Natural killer cell (primary cell): ENCODE measurements at regions of chr9 and their contacts with region 1.

Region 1: DNA sequence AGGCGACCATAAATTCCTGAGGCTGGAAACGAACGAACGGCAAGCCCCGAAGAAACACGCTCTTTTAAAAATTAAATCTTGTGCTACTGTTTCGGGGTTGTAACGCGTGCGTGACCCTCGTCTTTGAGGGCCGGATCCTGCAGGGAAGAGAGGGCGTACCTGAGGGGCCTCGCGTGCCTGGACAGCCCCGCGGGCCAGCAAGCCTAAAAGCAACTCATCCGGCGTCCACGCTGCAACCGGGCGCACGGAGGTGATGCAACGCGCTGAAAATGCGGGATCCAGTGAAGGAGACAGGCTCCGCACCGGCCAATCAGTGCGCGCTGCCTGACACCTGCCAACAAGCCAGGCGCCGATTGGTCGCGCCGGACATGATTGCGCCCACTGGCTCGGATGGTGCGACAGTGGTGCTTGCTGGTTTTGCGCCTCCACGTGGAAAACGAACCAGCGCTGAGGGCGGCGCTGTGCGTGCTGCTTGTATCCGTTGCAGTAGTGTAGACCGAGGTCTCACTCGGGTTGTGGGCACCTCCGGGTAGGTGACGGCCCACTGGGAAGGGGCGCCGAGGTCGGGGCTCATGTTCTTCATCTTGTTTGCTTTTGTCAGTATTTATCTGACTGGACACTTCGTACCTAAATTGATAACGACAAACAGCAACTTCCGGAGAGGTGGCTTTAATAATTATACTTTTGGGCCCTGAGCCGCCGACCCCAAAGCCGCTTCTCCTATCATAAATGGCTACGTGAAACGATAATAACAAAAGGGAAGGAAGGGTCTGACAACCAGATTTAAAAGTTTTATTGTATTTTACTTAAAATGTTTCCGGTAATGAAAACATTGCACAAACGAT is at the start of gene IARS1:
- DNase-seq: peak; percentile 99 to 100
- ATAC-seq: peak; percentile 92 to 99 (median 96)
- H3K4me3 ChIP-seq: peak within 1 kb of the TSS; percentile 89
- H3K4me3 Mint-ChIP-seq: peak within 1 kb of the TSS; percentile 100
- H3K27ac ChIP-seq: peak within 1 kb of the TSS; percentile 72
- H3K27ac Mint-ChIP-seq: peak within 1 kb of the TSS; percentile 97 to 98
- H3K4me1 ChIP-seq: peaks cover 16% of the 10 kb centered on the region
- H3K4me1 Mint-ChIP-seq: peaks cover 36 to 40% of the 10 kb centered on the region in 2 donors
- H3K27me3 ChIP-seq: no peaks in the 10 kb centered on the region
- H3K27me3 Mint-ChIP-seq: no peaks in the 10 kb centered on the region
- CTCF ChIP-seq: peak; percentile 40
- total RNA-seq, gene IARS1: 50.8 to 70.8 (median 66.2) TPM

Region 2: DNA sequence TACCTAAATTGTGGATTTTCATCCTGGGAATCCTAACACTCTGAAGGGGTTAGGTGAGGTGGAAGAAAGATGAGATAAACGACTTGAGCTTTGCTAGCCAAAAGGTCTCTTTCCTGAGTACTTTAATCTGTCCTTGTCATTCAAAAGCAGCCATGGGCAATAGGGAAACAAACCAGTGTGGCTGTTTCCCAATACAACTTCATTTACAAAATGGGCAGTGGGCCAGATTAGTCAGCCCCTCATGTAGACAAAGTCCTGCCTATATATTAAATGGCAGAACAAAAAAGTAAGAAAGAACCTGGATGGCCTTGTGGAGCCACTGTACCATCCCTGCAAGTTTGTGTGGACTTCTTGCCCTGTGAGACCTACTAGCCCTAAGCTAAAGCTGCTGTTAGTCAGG is 819.0 kb before region 1 on chr9:
- intact Hi-C with region 1: no loop called
- DNase-seq: no peak
- ATAC-seq: no peak
- H3K4me3 ChIP-seq: no peak overlapping the region
- H3K4me3 Mint-ChIP-seq: no peak overlapping the region
- H3K27ac ChIP-seq: no peak overlapping the region
- H3K27ac Mint-ChIP-seq: no peak overlapping the region
- H3K4me1 ChIP-seq: no peaks in the 10 kb centered on the region
- H3K4me1 Mint-ChIP-seq: no peaks in the 10 kb centered on the region
- H3K27me3 ChIP-seq: peaks cover 2% of the 10 kb centered on the region
- H3K27me3 Mint-ChIP-seq: peaks cover 10 to 21% of the 10 kb centered on the region in 2 donors
- CTCF ChIP-seq: no peak

Region 3: DNA sequence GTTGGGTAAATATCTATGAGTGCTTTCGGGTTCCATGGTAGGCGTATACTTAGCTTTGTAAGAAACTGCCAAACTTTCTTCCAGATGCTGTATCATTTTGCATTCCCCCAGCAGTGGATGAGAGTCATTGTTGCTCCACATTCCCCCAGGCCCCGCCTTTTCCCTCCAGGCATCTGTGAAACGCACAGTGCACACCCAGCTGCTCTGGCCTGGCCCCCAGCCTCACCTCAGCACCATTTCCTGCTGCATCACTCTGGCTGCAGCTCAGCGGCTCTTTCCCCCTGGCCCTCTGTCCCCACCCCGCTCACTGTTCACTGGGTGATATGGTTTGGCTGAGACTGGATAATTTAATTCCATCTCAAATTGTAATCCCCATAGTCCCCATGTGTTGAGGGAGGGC is 101.9 kb before region 1 on chr9:
- intact Hi-C with region 1: no loop called
- DNase-seq: no peak
- ATAC-seq: no peak
- H3K4me3 ChIP-seq: no peak overlapping the region
- H3K4me3 Mint-ChIP-seq: no peak overlapping the region
- H3K27ac ChIP-seq: no peak overlapping the region
- H3K27ac Mint-ChIP-seq: no peak overlapping the region
- H3K4me1 ChIP-seq: no peaks in the 10 kb centered on the region
- H3K4me1 Mint-ChIP-seq: no peaks in the 10 kb centered on the region
- H3K27me3 ChIP-seq: no peaks in the 10 kb centered on the region
- H3K27me3 Mint-ChIP-seq: peaks cover 6 to 15% of the 10 kb centered on the region in 2 donors
- CTCF ChIP-seq: no peak

Region 4: GRCh38 chr9:92325269-92325990 is 31.8 kb after region 1 on chr9 and contains the starts of genes CENPP and NOL8:
- intact Hi-C with region 1: loop called (anchors 1 kb)
- DNase-seq: peak; percentile 82 to 91
- ATAC-seq: peak; percentile 91 to 96 (median 91)
- H3K4me3 ChIP-seq: peak within 1 kb of the TSS; percentile 65
- H3K4me3 Mint-ChIP-seq: peak within 1 kb of the TSS; percentile 99
- H3K27ac ChIP-seq: peak within 1 kb of the TSS; percentile 95
- H3K27ac Mint-ChIP-seq: peak within 1 kb of the TSS; percentile 98
- H3K4me1 ChIP-seq: peaks cover 4% of the 10 kb centered on the region
- H3K4me1 Mint-ChIP-seq: peaks cover 31 to 33% of the 10 kb centered on the region in 2 donors
- H3K27me3 ChIP-seq: no peaks in the 10 kb centered on the region
- H3K27me3 Mint-ChIP-seq: no peaks in the 10 kb centered on the region
- CTCF ChIP-seq: no peak
- total RNA-seq, gene CENPP: 10.3 to 14.5 (median 12.1) TPM
- total RNA-seq, gene NOL8: 42.3 to 50.7 (median 46.7) TPM

Region 5: DNA sequence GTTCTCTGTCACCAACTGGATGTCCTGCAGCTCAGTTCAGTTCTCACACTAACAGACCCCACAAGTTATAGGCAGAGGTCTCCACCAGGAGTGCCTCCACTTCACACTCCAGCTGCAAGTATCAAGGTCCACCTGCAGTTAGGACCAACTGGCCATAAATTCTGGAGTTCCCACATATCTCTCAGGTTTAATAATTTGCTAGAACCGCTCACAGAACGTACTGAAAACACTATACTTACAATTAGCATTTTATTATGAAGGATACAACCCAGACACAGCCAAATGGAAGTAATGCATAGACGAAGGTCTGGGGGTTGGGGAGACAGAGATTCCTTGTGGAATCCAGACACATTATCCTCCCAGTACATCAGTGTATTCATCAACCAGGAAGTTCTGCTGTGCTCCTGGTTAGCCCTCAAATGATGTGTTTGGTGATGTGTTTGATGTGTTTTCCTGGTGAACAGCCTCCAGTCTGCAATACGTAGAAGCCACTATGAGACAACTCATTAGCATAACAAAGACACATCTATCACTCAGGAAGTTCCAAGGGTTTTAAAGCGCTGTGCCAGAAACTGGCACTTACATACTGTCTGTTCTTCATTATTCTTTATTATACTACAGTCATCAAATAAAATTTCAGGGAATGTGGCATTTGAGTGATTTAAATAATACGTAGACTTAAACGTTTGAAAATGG is 85.3 kb after region 1 on chr9:
- intact Hi-C with region 1: no loop called
- DNase-seq: peak in 1 of 2 donors; percentile 39
- ATAC-seq: peak; percentile 28 to 42 (median 32)
- H3K4me3 ChIP-seq: no peak overlapping the region
- H3K4me3 Mint-ChIP-seq: no peak overlapping the region
- H3K27ac ChIP-seq: no peak overlapping the region
- H3K27ac Mint-ChIP-seq: peak overlapping the region in 1 of 2 donors; percentile 88
- H3K4me1 ChIP-seq: peaks cover 4% of the 10 kb centered on the region
- H3K4me1 Mint-ChIP-seq: peaks cover 31 to 36% of the 10 kb centered on the region in 2 donors
- H3K27me3 ChIP-seq: no peaks in the 10 kb centered on the region
- H3K27me3 Mint-ChIP-seq: no peaks in the 10 kb centered on the region
- CTCF ChIP-seq: no peak